Posterior vena cava (tissue), 2 donors: ENCODE measurements at regions of chr22 and their contacts with region 1.

Region 1: DNA sequence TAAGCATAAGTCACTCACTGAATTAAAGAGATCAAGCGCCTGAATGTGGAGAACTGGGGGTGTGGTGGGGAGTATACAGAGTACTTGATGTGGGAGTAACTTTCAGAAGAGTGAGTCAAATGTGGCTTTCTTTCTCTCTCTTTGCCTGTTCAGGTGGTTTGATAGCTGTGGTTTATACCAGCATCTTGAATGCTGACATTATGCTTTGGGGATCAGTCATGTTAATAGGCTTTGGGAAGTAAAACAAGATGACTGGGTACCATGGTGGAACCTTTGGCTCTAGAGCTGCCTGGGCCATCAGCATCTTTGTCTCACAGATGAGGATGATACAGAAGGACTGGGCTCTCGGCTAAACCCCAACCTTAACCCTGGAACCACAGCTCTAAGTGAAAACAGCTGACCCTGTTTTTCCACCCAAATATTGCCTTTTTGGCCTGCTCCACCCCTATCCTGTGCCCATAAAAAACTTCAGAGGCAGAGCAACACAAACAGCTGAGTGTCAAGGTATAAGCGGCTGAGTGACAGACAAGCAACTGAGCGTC is 58.2 kb upstream of the GNAZ start:
- DNase-seq: no peak

Region 2: GRCh38 chr22:22698263-22698750 is 313.8 kb before region 1 on chr22:
- intact Hi-C with region 1: loop called in 1 of 2 experiments (anchors 5 kb)
- DNase-seq: no peak

Region 3: DNA sequence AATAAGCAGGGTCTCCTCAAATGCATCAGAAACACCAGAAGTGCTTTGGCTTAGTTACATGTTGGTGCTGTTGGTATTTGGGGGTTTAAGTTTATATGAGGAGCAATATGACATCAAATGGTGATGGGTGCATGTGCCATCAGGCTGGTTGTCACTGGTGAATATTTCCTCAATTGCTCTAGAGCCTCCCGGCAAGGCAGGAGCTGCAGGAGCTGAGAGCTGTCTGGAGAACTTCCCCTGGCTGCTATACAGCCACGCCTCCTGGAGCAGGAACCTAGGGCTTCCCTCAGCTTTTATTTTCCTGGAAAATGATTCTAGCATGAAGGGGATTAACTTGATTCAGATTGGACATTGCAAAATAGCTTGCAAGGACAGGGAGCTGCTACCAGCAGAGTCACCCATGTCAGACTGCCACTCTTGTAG is 108.8 kb before region 1 on chr22:
- intact Hi-C with region 1: no loop called
- DNase-seq: peak; percentile 18